ENCODE measurements at regions of chr12 and their contacts with region 1.

Region 1: GRCh38 chr12:123928274-123928865 is 44.3 kb downstream of the CCDC92 start:
- DNase-seq: peak in 1 of 2 experiments; percentile 31
- H3K4me3 ChIP-seq: no peak overlapping the region
- H3K4me3 Mint-ChIP-seq: no peak overlapping the region
- H3K27ac Mint-ChIP-seq: no peak overlapping the region
- H3K4me1 ChIP-seq: no peaks in the 10 kb centered on the region
- H3K4me1 Mint-ChIP-seq: no peaks in the 10 kb centered on the region
- H3K27me3 ChIP-seq: no peaks in the 10 kb centered on the region
- H3K27me3 Mint-ChIP-seq: no peaks in the 10 kb centered on the region
- CTCF ChIP-seq: no peak

Region 2: GRCh38 chr12:123801573-123802178 is 126.7 kb before region 1 on chr12:
- CTCF ChIA-PET with region 1: no interaction called
- POLR2A ChIA-PET with region 1: no interaction called
- intact Hi-C with region 1: loop called (anchors 1 kb)
- DNase-seq: no peak
- H3K4me3 ChIP-seq: no peak overlapping the region
- H3K4me3 Mint-ChIP-seq: no peak overlapping the region
- H3K27ac Mint-ChIP-seq: no peak overlapping the region
- H3K4me1 ChIP-seq: no peaks in the 10 kb centered on the region
- H3K4me1 Mint-ChIP-seq: no peaks in the 10 kb centered on the region
- H3K27me3 ChIP-seq: no peaks in the 10 kb centered on the region
- H3K27me3 Mint-ChIP-seq: peaks cover 6% of the 10 kb centered on the region
- CTCF ChIP-seq: peak in 1 of 2 experiments; percentile 40

Region 3: DNA sequence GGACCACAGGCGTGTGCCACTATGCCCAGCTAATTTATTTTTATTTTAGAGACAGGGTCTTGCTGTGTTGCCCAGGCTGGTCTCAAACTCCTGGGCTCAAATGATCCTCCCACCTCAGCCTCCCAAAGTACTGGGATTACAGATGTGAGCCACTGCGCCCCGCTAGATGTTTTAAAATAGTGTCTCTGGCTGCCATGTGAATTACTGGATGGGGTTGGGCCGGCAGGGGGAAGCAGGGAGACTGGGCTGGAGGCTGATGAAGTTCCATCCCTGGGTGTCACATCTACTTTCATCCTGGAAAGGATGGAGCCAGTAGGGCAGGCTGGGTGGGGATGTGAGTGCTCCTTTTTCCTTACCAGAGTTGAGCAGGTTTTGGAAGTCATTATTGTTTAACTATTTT is 120.2 kb before region 1 on chr12:
- CTCF ChIA-PET with region 1: no interaction called
- POLR2A ChIA-PET with region 1: no interaction called
- intact Hi-C with region 1: loop called (anchors 2 kb)
- DNase-seq: peak; percentile 49 to 64
- H3K4me3 ChIP-seq: no peak overlapping the region
- H3K4me3 Mint-ChIP-seq: no peak overlapping the region
- H3K27ac Mint-ChIP-seq: no peak overlapping the region
- H3K4me1 ChIP-seq: no peaks in the 10 kb centered on the region
- H3K4me1 Mint-ChIP-seq: no peaks in the 10 kb centered on the region
- H3K27me3 ChIP-seq: no peaks in the 10 kb centered on the region
- H3K27me3 Mint-ChIP-seq: peaks cover 6% of the 10 kb centered on the region
- CTCF ChIP-seq: peak; percentile 53 to 65

Region 4: DNA sequence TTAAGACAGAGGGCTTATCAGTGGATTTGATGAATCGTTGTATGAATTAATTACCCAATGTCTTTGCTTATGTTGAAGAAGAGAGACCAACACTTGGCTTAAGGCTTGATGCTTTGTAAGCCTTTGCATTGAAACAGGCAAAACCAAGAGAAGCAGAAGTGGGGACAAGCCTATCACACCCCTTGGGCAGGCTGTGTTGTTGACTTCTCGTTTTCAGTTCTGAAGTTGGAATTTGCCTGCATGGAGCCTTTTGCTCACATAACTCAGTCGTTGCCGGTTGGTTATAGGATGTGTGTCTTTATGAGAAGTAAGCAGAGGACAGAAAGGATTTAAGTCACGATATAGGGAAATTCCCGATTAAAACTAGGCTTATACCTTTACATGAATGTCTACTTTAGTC is 50.4 kb before region 1 on chr12:
- CTCF ChIA-PET with region 1: no interaction called
- POLR2A ChIA-PET with region 1: no interaction called
- intact Hi-C with region 1: no loop called
- DNase-seq: no peak
- H3K4me3 ChIP-seq: no peak overlapping the region
- H3K4me3 Mint-ChIP-seq: no peak overlapping the region
- H3K27ac Mint-ChIP-seq: no peak overlapping the region
- H3K4me1 ChIP-seq: no peaks in the 10 kb centered on the region
- H3K4me1 Mint-ChIP-seq: no peaks in the 10 kb centered on the region
- H3K27me3 ChIP-seq: no peaks in the 10 kb centered on the region
- H3K27me3 Mint-ChIP-seq: peaks cover 4% of the 10 kb centered on the region
- CTCF ChIP-seq: no peak

Region 5: DNA sequence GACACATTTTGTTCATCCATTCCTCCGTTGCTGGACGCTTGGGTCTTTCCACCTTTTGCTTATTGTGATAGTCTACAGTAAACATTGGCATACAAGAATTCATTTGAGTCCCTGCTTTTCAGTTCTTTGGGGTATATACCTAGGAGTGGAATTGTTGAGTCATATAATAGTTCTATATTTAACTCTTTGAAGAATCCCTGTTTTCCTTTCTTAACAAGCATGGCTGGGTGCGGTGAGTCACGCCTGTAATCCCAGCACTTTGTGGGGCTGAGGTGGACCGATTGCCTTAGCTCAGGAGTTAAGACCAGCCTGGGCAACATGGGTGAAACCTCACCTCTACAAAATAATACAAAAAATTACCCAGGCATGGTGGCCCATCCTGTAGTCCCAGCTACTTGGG is 31.1 kb before region 1 on chr12:
- CTCF ChIA-PET with region 1: no interaction called
- POLR2A ChIA-PET with region 1: no interaction called
- intact Hi-C with region 1: no loop called
- DNase-seq: no peak
- H3K4me3 ChIP-seq: no peak overlapping the region
- H3K4me3 Mint-ChIP-seq: no peak overlapping the region
- H3K27ac Mint-ChIP-seq: no peak overlapping the region
- H3K4me1 ChIP-seq: no peaks in the 10 kb centered on the region
- H3K4me1 Mint-ChIP-seq: no peaks in the 10 kb centered on the region
- H3K27me3 ChIP-seq: no peaks in the 10 kb centered on the region
- H3K27me3 Mint-ChIP-seq: peaks cover 7% of the 10 kb centered on the region
- CTCF ChIP-seq: no peak

Region 6: DNA sequence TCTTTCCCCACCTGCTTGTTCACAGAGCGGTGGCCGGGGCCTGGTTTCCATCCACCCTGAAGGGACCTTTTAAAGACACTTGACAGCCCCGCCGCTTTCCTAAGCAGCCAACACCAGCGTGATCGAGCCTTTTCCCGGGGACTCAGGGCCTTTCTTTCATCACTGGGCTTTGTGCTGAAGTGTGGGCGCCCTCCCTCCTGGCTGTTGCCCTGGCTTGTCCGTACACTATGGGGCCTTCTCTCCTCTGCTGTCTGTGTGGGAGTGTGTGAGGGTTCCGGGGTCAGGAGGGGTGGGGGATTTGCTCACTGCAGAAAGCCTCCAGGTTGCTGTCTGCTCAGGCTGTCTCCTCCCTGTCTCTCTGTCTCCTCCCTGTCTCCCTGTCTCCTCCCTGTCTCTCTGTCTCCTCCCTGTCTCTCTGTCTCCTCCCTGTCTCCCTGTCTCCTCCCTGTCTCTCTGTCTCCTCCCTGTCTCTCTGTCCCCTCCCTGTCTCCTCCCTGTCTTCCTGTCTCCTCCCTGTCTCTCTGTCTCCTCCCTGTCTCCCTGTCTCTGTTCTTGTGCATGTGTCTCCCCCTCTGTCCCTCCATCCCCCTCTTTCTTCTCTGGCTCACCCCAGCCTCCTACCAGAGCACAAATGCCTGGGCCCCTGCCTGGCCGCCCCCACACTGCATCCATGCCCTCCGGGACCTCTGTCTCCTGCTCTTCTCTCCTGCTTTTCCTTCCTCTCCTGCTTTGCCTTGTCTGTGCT is 20.5 kb before region 1 on chr12:
- CTCF ChIA-PET with region 1: no interaction called
- POLR2A ChIA-PET with region 1: no interaction called
- intact Hi-C with region 1: no loop called
- DNase-seq: no peak
- H3K4me3 ChIP-seq: no peak overlapping the region
- H3K4me3 Mint-ChIP-seq: no peak overlapping the region
- H3K27ac Mint-ChIP-seq: no peak overlapping the region
- H3K4me1 ChIP-seq: no peaks in the 10 kb centered on the region
- H3K4me1 Mint-ChIP-seq: no peaks in the 10 kb centered on the region
- H3K27me3 ChIP-seq: no peaks in the 10 kb centered on the region
- H3K27me3 Mint-ChIP-seq: no peaks in the 10 kb centered on the region
- CTCF ChIP-seq: no peak